Endothelial cell of umbilical vein (primary cell): ENCODE measurements at regions of chr3 and their contacts with region 1.

Region 1: GRCh38 chr3:119034256-119035013 is at the start of gene IGSF11:
- DNase-seq: peak; percentile 61
- H3K4me3 ChIP-seq: peak within 1 kb of the TSS in 2 of 3 experiments; percentile 21 to 45
- H3K27ac ChIP-seq: no peak within 1 kb of the TSS
- H3K4me1 ChIP-seq: no peaks in the 10 kb centered on the region
- H3K27me3 ChIP-seq: peaks cover 28 to 46% of the 10 kb centered on the region in 2 experiments
- CTCF ChIP-seq: peak; percentile 51 to 54
- POLR2A ChIP-seq: no peak
- total RNA-seq, gene IGSF11: not detected in 2 replicates

Region 2: GRCh38 chr3:119018690-119019463 is 15.6 kb before region 1 on chr3:
- CTCF ChIA-PET with region 1: interaction called, 10 read pairs
- POLR2A ChIA-PET with region 1: no interaction called
- dilution Hi-C with region 1: no loop called
- intact Hi-C with region 1: no loop called
- DNase-seq: no peak
- H3K4me3 ChIP-seq: no peak overlapping the region
- H3K27ac ChIP-seq: no peak overlapping the region
- H3K4me1 ChIP-seq: no peaks in the 10 kb centered on the region
- H3K27me3 ChIP-seq: no peaks in the 10 kb centered on the region
- CTCF ChIP-seq: no peak
- POLR2A ChIP-seq: no peak